Activated CD4-positive, alpha-beta T cell treated with anti-CD3 and anti-CD28 coated beads, Interleukin-2, amount 10 ng/mL, durations not matched to agents 7 days and 5 days (primary cell): ENCODE measurements at regions of chr2 and their contacts with region 1.

Region 1: GRCh38 chr2:152717228-152718075 is at the start of gene PRPF40A:
- DNase-seq: peak; percentile 99
- H3K4me3 Mint-ChIP-seq: peak within 1 kb of the TSS; percentile 99
- H3K27ac Mint-ChIP-seq: peak within 1 kb of the TSS; percentile 99
- H3K4me1 Mint-ChIP-seq: peaks cover 66% of the 10 kb centered on the region
- H3K27me3 Mint-ChIP-seq: no peaks in the 10 kb centered on the region
- total RNA-seq, gene PRPF40A: 107 to 109 TPM

Region 2: GRCh38 chr2:152664703-152665102 is 52.7 kb before region 1 on chr2:
- CTCF ChIA-PET with region 1: no interaction called
- POLR2A ChIA-PET with region 1: no interaction called
- DNase-seq: no peak
- H3K4me3 Mint-ChIP-seq: no peak overlapping the region
- H3K27ac Mint-ChIP-seq: no peak overlapping the region
- H3K4me1 Mint-ChIP-seq: no peaks in the 10 kb centered on the region
- H3K27me3 Mint-ChIP-seq: no peaks in the 10 kb centered on the region

Region 3: DNA sequence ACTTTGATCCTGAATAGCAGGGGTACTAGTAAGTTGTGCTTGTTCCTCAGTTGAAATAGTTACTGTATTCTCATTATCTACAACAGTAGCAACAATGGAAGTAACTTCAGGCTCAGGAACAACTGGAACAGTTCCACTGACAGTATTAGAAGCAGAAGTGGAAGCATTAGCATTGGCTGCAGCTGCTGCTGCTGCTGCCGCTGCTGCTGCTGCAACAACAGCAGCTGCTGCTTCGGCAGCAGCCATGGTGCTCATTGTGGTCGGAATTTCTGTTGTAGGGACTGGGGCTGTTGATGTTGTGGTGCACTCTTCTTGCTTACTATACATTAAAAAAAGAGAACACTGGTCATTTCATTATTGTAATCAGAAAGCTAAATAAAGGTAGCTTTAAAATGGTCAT is 41.0 kb before region 1 on chr2:
- CTCF ChIA-PET with region 1: no interaction called
- POLR2A ChIA-PET with region 1: no interaction called
- DNase-seq: no peak
- H3K4me3 Mint-ChIP-seq: no peak overlapping the region
- H3K27ac Mint-ChIP-seq: no peak overlapping the region
- H3K4me1 Mint-ChIP-seq: no peaks in the 10 kb centered on the region
- H3K27me3 Mint-ChIP-seq: no peaks in the 10 kb centered on the region

Region 4: GRCh38 chr2:152694161-152694661 is 23.2 kb before region 1 on chr2:
- CTCF ChIA-PET with region 1: interaction called, 3 read pairs
- POLR2A ChIA-PET with region 1: interaction called, 10 read pairs
- DNase-seq: peak; percentile 41
- H3K4me3 Mint-ChIP-seq: peak overlapping the region; percentile 80
- H3K27ac Mint-ChIP-seq: peak overlapping the region; percentile 98
- H3K4me1 Mint-ChIP-seq: peaks cover 34% of the 10 kb centered on the region
- H3K27me3 Mint-ChIP-seq: no peaks in the 10 kb centered on the region